Activated CD4-positive, alpha-beta memory T cell treated with anti-CD3 and anti-CD28 coated beads for 36 hours (primary cell): ENCODE measurements at regions of chr1 and their contacts with region 1.

Region 1: DNA sequence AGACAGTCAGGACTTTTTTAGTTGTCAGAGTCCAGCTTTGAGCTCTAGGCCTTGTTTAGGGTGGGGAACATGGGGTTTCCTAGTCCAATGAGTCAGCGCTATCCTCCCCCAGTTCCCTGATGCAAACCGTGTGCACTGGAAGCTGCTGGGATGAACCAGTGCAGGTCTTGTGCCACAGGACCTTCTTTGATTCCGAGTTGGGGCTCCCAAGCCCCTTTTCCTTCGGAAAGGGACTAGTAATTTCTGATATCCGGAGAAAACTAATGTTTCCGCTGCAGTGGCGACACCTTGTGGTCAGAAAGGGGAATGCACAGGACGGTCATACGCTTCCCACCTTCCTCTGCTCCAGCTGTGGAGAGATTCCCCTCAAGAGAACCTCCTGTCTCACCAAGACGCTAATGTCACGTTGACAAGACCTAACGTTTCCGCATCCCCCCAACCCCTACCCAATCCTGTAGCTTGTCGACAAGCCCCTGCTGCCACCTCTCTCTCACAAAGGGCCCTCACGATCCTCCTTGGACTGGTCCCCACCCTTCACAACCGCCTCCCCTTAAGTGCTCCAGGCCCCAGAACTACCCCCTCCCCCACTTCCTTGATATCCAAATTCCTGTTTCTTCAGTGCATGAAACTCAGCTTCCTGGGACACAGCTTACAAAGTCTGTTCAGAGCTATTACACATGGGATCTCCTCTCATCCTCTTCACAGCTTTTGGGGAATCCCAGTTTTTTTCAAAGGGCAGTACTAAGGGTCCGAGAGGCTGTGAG is 30.9 kb downstream of the GPA33 start:
- DNase-seq: peak; percentile 84
- H3K4me3 Mint-ChIP-seq: no peak overlapping the region
- H3K27ac Mint-ChIP-seq: no peak overlapping the region
- H3K4me1 Mint-ChIP-seq: peaks cover 6% of the 10 kb centered on the region
- H3K27me3 Mint-ChIP-seq: no peaks in the 10 kb centered on the region

Region 2: DNA sequence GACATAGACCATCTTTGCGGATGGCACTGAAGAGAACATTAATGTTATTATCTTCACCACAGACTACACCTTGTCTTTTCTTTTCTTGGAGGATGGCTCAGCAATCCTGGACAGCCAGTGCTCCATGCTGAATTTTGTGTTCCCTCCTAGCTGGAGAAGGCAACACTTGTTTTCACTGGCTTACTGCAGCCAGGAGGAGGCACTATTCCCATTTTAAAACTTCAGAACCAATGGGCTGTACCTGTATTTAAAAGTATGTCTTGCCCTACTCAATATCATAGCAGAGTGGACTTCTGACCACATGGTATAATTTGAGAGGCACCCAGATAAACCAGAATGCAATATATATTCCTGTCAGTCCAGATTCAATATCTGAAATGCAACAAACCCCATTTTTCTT is 273.2 kb before region 1 on chr1:
- CTCF ChIA-PET with region 1: interaction called, 16 read pairs
- POLR2A ChIA-PET with region 1: no interaction called
- intact Hi-C with region 1: no loop called
- DNase-seq: no peak
- H3K4me3 Mint-ChIP-seq: no peak overlapping the region
- H3K27ac Mint-ChIP-seq: no peak overlapping the region
- H3K4me1 Mint-ChIP-seq: no peaks in the 10 kb centered on the region
- H3K27me3 Mint-ChIP-seq: peaks cover 12% of the 10 kb centered on the region

Region 3: DNA sequence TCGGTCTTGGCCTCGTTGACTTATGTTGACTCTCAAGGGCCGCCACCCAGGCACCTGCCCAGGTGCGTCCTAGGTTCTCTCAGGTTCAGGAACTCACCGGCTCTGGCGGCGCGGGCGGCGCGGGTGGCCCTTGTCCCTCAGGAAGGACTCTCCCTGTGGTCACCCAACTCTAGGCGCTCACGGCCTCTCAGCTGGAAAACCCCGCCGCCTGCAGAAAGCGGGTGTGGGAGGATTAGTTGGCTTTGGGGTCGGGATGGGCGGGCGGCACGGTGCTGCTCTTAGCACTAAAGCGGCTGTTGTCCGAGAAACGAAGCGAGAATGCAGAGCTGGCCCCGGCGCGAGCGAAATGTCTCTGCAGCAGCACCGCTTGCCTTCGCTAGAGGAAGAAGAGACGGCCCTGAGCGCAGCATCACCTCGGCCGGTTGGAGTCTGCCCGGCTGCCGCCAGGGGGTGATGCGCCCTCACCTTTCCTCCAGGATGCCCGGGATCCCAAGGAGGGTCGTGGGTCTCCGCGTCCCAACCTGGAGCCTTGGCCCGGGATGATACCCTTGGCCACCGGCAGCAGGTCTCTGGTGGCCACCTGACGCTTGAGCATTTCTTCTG is 175.1 kb before region 1 on chr1:
- CTCF ChIA-PET with region 1: interaction called, 70 read pairs
- POLR2A ChIA-PET with region 1: no interaction called
- intact Hi-C with region 1: loop called (anchors 1 kb)
- DNase-seq: peak; percentile 61
- H3K4me3 Mint-ChIP-seq: no peak overlapping the region
- H3K27ac Mint-ChIP-seq: no peak overlapping the region
- H3K4me1 Mint-ChIP-seq: peaks cover 14% of the 10 kb centered on the region
- H3K27me3 Mint-ChIP-seq: peaks cover 20% of the 10 kb centered on the region

Region 4: GRCh38 chr1:166975361-166976129 is 83.7 kb before region 1 on chr1 and contains the start of gene ILDR2:
- CTCF ChIA-PET with region 1: interaction called, 25 read pairs
- POLR2A ChIA-PET with region 1: no interaction called
- intact Hi-C with region 1: loop called (anchors 2 kb)
- DNase-seq: peak; percentile 88
- H3K4me3 Mint-ChIP-seq: peak within 1 kb of the TSS; percentile 88
- H3K27ac Mint-ChIP-seq: peak within 1 kb of the TSS; percentile 88
- H3K4me1 Mint-ChIP-seq: peaks cover 47% of the 10 kb centered on the region
- H3K27me3 Mint-ChIP-seq: peaks cover 16% of the 10 kb centered on the region
- total RNA-seq, gene ILDR2: 12.5 to 13.0 TPM

Region 5: DNA sequence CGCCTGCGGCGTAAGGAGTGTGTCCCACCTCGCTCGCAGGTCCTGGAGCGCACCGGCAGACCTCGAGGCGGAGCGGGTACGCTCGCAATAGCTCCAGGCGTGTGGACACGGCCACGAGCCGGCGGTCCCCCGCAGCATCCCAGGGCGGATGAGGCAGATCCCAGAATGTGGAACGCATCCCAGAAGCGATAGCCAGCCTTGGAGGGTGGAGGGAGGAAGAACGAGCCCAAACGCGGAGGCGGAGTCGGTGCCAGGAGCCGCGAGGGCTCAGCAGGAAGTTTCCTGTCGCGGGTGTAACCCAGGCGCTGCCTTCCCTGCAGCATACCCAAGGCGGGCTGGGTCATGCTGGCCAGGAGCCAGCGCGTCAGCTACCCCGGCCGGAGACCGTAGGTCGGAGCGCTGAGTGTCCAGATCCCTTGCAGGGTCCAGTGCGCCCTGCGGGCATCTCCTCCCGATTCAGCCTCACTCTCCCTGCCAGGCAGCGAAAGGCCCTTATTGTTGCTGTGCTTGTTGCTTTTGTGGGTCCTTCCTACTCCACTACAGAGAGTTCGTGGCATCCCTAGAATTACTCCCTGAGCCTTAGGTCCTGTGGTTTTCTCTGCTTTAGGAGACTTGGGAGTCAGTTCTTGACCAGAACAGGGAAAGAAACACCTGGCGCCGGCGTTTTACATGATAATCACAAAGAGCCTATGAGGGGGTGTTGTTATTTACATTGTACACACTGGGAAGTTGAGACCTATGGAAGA is 62.3 kb after region 1 on chr1:
- CTCF ChIA-PET with region 1: interaction called, 19 read pairs
- POLR2A ChIA-PET with region 1: no interaction called
- intact Hi-C with region 1: no loop called
- DNase-seq: peak; percentile 51
- H3K4me3 Mint-ChIP-seq: peak overlapping the region; percentile 74
- H3K27ac Mint-ChIP-seq: no peak overlapping the region
- H3K4me1 Mint-ChIP-seq: peaks cover 5% of the 10 kb centered on the region
- H3K27me3 Mint-ChIP-seq: no peaks in the 10 kb centered on the region

Region 6: DNA sequence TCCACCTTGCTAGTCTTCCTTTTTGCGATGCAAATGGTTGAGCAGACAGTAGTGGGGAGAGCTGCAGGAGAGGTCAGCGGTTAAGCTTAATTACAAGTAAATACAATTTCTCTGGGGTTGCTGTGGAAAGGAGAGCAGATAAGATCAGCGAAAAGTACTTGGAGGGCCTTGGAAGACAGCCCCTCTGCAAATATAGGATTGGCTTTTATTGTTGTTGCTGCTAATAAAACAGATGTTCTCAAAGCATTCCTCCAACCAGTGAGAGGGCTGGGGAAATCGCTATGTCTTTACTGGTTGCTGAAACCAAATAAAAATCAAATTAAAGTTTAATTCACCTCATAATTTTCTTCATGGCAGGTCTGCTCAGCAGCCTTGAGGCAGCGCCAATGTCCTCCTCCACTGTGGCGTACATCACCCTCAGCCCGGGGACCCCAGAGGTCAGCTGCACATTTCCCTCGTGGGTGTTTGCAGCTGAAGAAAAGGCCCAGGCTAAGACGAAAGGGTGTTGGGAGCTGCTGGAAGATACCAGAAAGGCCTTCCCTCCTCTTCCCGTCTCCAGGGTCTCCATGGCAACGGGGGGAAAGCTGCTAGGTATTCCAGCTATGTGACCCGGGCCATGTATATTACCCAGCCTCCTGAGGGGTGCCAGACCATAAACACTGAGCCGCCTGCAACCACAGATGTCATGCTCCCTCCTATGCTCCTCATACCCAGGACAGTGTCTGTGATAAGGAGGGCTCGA is 106.9 kb after region 1 on chr1:
- CTCF ChIA-PET with region 1: no interaction called
- POLR2A ChIA-PET with region 1: no interaction called
- intact Hi-C with region 1: no loop called
- DNase-seq: no peak
- H3K4me3 Mint-ChIP-seq: no peak overlapping the region
- H3K27ac Mint-ChIP-seq: no peak overlapping the region
- H3K4me1 Mint-ChIP-seq: peaks cover 6% of the 10 kb centered on the region
- H3K27me3 Mint-ChIP-seq: peaks cover 35% of the 10 kb centered on the region

Region 7: DNA sequence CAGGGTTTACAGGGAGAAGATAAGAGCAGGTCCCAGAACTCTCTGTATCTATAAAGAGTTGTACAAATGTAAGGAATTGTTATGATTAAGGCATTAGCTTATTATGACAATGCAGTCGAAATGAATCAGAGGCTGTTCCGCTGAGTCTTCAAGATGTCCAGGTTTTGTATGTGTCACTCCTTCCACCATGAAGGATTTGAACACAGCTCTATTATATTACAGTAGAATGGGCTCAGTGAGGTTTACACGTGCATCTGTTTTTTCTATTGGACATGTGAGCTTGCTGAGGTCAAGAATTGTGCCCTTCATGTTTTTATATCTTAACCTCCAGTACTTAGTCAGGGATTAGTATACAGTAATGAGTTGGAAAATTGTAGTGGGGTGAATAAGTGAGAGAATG is 748.9 kb after region 1 on chr1:
- CTCF ChIA-PET with region 1: no interaction called
- POLR2A ChIA-PET with region 1: no interaction called
- intact Hi-C with region 1: no loop called
- DNase-seq: peak; percentile 23
- H3K4me3 Mint-ChIP-seq: no peak overlapping the region
- H3K27ac Mint-ChIP-seq: no peak overlapping the region
- H3K4me1 Mint-ChIP-seq: peaks cover 26% of the 10 kb centered on the region
- H3K27me3 Mint-ChIP-seq: peaks cover 3% of the 10 kb centered on the region